ENCODE measurements at regions of chr4 and their contacts with region 1.

Region 1: GRCh38 chr4:53313510-53313909 is 52.4 kb downstream of the SCFD2 start:
- DNase-seq: peak; percentile 38 to 48
- H3K4me3 ChIP-seq: no peak overlapping the region
- H3K4me3 Mint-ChIP-seq: no peak overlapping the region
- H3K27ac Mint-ChIP-seq: no peak overlapping the region
- H3K4me1 ChIP-seq: no peaks in the 10 kb centered on the region
- H3K4me1 Mint-ChIP-seq: peaks cover 13% of the 10 kb centered on the region
- H3K27me3 ChIP-seq: no peaks in the 10 kb centered on the region
- H3K27me3 Mint-ChIP-seq: no peaks in the 10 kb centered on the region
- CTCF ChIP-seq: peak in 1 of 2 experiments; percentile 54

Region 2: DNA sequence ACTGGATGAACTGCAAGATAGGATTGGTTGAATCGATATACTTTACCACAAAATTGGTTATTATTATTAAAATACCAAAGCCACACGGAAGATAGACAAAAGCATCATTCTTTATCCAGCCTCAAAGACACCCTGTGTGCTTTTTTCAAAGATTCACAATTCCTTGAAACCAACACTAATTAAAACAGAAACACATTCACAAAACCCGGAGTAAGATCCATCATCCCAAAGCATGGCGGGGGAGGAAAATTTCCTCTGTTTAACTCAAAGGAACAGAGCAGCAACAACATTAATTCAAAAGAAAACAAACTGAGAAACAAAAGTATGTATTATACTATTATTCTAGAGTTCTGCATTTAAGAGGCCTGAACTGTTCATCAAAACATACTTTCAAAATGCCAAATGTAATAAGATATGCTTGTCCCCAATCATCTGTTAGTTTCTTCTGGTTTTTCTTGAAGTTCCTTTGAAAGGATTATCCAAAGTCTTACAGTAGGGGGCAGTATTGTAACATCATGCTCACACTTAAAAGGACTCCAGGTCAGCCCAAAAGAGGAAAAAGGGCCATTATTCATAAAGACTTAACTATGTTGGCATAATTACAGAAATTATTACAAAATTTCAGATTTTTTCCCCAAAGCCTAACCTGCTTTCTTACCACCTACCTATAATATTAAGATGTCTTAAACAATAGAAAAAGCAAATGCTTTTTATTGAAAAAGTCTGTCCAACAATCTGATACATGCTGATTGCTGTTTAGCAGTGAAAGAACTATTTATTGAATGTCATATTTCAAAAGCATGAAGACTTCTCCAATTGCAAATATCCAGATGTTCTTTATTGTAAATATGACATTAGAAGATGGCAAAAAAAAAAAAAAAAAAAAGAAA is 116.4 kb before region 1 on chr4:
- CTCF ChIA-PET with region 1: no interaction called
- POLR2A ChIA-PET with region 1: no interaction called
- intact Hi-C with region 1: loop called (anchors 10 kb)
- DNase-seq: peak in 1 of 2 experiments; percentile 59
- H3K4me3 ChIP-seq: no peak overlapping the region
- H3K4me3 Mint-ChIP-seq: no peak overlapping the region
- H3K27ac Mint-ChIP-seq: no peak overlapping the region
- H3K4me1 ChIP-seq: no peaks in the 10 kb centered on the region
- H3K4me1 Mint-ChIP-seq: peaks cover 3% of the 10 kb centered on the region
- H3K27me3 ChIP-seq: no peaks in the 10 kb centered on the region
- H3K27me3 Mint-ChIP-seq: no peaks in the 10 kb centered on the region
- CTCF ChIP-seq: peak; percentile 61 to 66

Region 3: DNA sequence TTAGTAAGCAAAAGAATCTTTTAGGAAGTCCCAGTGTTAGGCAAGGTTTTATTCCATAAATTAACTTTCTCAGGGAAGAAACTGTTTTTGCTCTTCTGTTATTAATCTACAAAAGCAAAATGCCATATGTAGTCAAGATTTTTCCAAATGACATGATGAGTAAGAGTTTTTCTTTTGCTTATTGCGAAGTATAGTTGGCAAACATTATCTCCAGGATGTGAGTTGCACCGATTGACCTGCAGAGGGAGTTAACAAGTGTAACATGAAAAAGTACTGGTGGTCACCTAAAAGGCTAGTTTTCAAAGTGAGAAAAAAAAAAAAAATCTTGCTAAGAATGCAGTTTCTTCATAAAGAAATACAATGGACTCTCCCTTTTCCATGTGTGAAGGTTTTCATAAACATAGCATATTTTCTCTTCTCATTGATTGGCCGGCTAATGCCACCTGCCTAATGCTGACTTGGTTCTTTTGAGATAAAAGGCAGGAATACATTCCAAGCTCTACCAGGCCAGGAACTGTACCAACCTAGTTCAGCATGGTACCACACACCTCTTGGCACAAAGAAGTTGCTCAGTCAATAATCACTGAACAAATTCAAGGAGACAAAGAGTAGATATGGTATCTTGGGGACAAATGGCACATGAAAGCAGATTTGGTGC is 177.6 kb after region 1 on chr4:
- CTCF ChIA-PET with region 1: no interaction called
- POLR2A ChIA-PET with region 1: no interaction called
- intact Hi-C with region 1: loop called (anchors 10 kb)
- DNase-seq: peak; percentile 49
- H3K4me3 ChIP-seq: no peak overlapping the region
- H3K4me3 Mint-ChIP-seq: no peak overlapping the region
- H3K27ac Mint-ChIP-seq: no peak overlapping the region
- H3K4me1 ChIP-seq: no peaks in the 10 kb centered on the region
- H3K4me1 Mint-ChIP-seq: no peaks in the 10 kb centered on the region
- H3K27me3 ChIP-seq: no peaks in the 10 kb centered on the region
- H3K27me3 Mint-ChIP-seq: no peaks in the 10 kb centered on the region
- CTCF ChIP-seq: peak; percentile 53 to 71

Region 4: DNA sequence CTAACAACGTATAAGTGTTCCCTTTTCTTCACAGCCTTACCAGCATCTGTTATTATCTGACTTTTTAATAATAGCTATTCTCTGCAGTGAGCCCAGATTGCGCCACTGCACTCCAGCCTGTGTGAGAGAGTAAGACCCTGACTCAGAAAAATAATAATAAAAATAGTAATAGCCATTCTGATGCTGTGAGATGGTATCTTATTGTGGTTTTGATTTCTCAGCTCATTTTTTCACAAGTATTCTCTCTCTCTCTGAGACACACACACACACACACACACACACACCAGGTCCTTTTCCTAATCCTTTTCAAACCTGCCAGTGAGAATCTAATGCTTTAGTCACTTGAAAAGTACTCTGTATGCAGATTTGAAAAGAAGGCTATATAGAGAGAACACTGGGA is 661.1 kb after region 1 on chr4:
- CTCF ChIA-PET with region 1: no interaction called
- POLR2A ChIA-PET with region 1: no interaction called
- intact Hi-C with region 1: no loop called
- DNase-seq: no peak
- H3K4me3 ChIP-seq: no peak overlapping the region
- H3K4me3 Mint-ChIP-seq: no peak overlapping the region
- H3K27ac Mint-ChIP-seq: no peak overlapping the region
- H3K4me1 ChIP-seq: no peaks in the 10 kb centered on the region
- H3K4me1 Mint-ChIP-seq: no peaks in the 10 kb centered on the region
- H3K27me3 ChIP-seq: no peaks in the 10 kb centered on the region
- H3K27me3 Mint-ChIP-seq: no peaks in the 10 kb centered on the region
- CTCF ChIP-seq: no peak

Measured in Caco-2 (cell line).